PC-9 (cell line): ENCODE measurements at regions of chr15 and their contacts with region 1.

Region 1: DNA sequence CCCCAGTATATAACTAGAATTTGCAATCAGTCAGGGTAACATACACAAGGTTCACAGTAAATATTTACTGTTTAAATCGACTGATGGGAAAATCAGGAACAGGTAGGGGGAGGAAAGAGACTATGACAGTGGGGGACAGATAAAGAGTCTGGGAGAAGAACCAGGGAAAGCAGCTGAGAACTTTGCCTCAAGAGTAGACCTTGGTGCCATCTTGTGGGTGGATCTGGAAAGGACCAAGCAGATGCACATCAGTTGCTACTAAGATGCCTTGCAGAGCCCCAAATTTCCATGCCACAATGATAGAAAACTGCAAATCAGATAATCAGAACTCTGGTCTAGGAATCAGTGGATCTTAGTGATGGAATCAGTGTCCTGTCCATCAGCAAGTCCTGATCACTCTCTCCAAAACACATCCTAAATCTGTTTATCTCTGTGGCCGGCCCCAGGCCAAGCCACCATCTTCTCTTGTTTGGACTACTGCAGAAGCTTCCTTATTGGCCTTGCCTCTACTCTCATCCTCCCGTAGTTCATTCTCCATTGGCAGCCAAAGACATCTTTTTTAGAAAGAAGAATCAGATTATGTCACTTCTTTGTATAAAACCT is 62.7 kb downstream of the PDE8A start:
- DNase-seq: peak in 1 of 2 experiments; percentile 47
- H3K4me3 ChIP-seq: no peak overlapping the region
- H3K27ac ChIP-seq: no peak overlapping the region
- H3K4me1 ChIP-seq: peaks cover 44% of the 10 kb centered on the region
- H3K27me3 ChIP-seq: no peaks in the 10 kb centered on the region
- CTCF ChIP-seq: peak; percentile 64

Region 2: DNA sequence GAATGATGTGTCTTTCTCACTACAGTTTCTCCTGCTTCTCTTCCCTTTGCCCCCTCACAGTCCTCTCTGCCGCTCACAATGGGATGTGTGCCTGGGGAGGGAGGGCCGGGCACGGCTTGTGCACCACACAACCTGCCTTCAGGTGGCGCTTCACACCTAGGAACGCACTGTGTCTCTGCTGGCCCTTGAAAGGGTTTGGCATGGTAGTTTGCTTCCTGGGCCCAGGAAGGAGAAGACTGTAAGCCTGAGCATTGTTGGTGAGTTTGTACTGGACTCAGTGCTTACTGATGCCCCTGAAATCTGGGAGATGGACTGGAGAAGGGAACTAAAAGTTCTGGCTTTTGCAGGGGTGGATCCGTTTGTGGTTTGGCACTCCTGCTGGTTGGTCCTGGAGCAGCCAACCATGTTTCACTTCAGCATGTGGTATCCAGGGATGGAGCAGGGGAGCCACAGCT is 218.0 kb before region 1 on chr15:
- CTCF ChIA-PET with region 1: no interaction called
- POLR2A ChIA-PET with region 1: no interaction called
- intact Hi-C with region 1: loop called (anchors 5 kb)
- DNase-seq: peak in 1 of 2 experiments; percentile 43
- H3K4me3 ChIP-seq: no peak overlapping the region
- H3K27ac ChIP-seq: no peak overlapping the region
- H3K4me1 ChIP-seq: peaks cover 8% of the 10 kb centered on the region; the same call in 1 of the 2 replicates
- H3K27me3 ChIP-seq: no peaks in the 10 kb centered on the region
- CTCF ChIP-seq: peak; percentile 66

Region 3: DNA sequence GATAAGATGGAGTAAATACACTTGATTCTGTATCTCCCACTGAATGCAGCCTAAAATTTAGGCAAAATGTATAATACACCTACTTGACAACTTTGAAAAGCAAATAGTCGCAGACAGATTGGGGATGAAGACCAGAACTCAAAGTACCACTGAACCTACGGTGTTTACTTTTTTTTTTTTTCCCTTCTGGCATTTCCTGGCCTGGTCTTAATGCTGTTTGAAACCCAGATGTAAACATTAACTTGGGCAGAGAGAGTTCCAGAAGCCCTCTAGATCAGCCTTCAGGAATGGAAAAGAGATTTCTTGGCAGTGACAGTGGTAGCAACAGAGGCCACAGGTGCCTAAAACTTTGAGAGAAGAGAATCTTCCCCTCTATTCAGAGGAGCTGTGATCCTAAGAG is 199.4 kb before region 1 on chr15:
- CTCF ChIA-PET with region 1: no interaction called
- POLR2A ChIA-PET with region 1: no interaction called
- intact Hi-C with region 1: loop called (anchors 1 kb)
- DNase-seq: peak in 1 of 2 experiments; percentile 5
- H3K4me3 ChIP-seq: no peak overlapping the region
- H3K27ac ChIP-seq: 0 out of 2 replicates have a peak overlapping the region, but pooled peaks have one; percentile 25
- H3K4me1 ChIP-seq: peaks cover 33% of the 10 kb centered on the region
- H3K27me3 ChIP-seq: no peaks in the 10 kb centered on the region
- CTCF ChIP-seq: no peak

Region 4: GRCh38 chr15:84955089-84955848 is 89.1 kb before region 1 on chr15:
- CTCF ChIA-PET with region 1: interaction called, 3 read pairs
- POLR2A ChIA-PET with region 1: no interaction called
- intact Hi-C with region 1: loop called (anchors 1 kb)
- DNase-seq: peak; percentile 54 to 60
- H3K4me3 ChIP-seq: no peak overlapping the region
- H3K27ac ChIP-seq: no peak overlapping the region
- H3K4me1 ChIP-seq: peaks cover 10% of the 10 kb centered on the region
- H3K27me3 ChIP-seq: no peaks in the 10 kb centered on the region
- CTCF ChIP-seq: peak; percentile 76

Region 5: DNA sequence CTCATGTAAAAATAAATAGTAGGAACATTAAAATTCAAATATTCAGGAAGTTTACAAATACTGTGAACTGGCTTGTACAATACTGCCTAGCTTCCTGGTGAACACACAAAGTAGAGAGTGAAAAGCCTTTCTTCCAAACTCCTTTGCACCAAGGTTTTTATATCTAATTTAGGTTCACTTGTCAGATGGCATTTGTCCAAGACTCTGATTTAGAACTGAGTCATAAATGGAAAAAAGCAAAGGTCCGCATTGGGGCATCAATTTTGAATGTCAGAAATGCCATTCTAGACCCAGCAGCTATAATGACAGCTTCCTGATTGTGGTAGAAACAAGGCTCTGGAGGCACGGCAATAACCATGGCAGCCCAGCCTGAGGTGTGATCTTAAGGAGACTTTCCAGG is 98.0 kb after region 1 on chr15:
- CTCF ChIA-PET with region 1: no interaction called
- POLR2A ChIA-PET with region 1: no interaction called
- intact Hi-C with region 1: no loop called
- DNase-seq: peak; percentile 41 to 65
- H3K4me3 ChIP-seq: no peak overlapping the region
- H3K27ac ChIP-seq: peak overlapping the region; percentile 21; the same call in 1 of the 2 replicates
- H3K4me1 ChIP-seq: peaks cover 15% of the 10 kb centered on the region
- H3K27me3 ChIP-seq: no peaks in the 10 kb centered on the region
- CTCF ChIP-seq: no peak